ENCODE measurements at regions of chr21 and their contacts with region 1.

Region 1: GRCh38 chr21:15586752-15587445 is 142.9 kb upstream of the USP25 start:
- DNase-seq: no peak
- H3K4me3 ChIP-seq: no peak overlapping the region
- H3K27ac ChIP-seq: no peak overlapping the region
- H3K4me1 ChIP-seq: no peaks in the 10 kb centered on the region
- H3K27me3 ChIP-seq: no peaks in the 10 kb centered on the region
- CTCF ChIP-seq: no peak

Region 2: GRCh38 chr21:14403681-14404318 is 1183.1 kb before region 1 on chr21:
- CTCF ChIA-PET with region 1: no interaction called
- POLR2A ChIA-PET with region 1: no interaction called
- intact Hi-C with region 1: loop called (anchors 10 kb)
- DNase-seq: peak; percentile 52
- H3K4me3 ChIP-seq: no peak overlapping the region
- H3K27ac ChIP-seq: no peak overlapping the region
- H3K4me1 ChIP-seq: no peaks in the 10 kb centered on the region
- H3K27me3 ChIP-seq: no peaks in the 10 kb centered on the region
- CTCF ChIP-seq: peak; percentile 71

Measured in A673 (cell line).